Activated CD4-positive, alpha-beta T cell treated with anti-CD3 and anti-CD28 coated beads, Interleukin-2, amount 10 ng/mL, durations not matched to agents 24 days and 14 days (primary cell): ENCODE measurements at regions of chr16 and their contacts with region 1.

Region 1: DNA sequence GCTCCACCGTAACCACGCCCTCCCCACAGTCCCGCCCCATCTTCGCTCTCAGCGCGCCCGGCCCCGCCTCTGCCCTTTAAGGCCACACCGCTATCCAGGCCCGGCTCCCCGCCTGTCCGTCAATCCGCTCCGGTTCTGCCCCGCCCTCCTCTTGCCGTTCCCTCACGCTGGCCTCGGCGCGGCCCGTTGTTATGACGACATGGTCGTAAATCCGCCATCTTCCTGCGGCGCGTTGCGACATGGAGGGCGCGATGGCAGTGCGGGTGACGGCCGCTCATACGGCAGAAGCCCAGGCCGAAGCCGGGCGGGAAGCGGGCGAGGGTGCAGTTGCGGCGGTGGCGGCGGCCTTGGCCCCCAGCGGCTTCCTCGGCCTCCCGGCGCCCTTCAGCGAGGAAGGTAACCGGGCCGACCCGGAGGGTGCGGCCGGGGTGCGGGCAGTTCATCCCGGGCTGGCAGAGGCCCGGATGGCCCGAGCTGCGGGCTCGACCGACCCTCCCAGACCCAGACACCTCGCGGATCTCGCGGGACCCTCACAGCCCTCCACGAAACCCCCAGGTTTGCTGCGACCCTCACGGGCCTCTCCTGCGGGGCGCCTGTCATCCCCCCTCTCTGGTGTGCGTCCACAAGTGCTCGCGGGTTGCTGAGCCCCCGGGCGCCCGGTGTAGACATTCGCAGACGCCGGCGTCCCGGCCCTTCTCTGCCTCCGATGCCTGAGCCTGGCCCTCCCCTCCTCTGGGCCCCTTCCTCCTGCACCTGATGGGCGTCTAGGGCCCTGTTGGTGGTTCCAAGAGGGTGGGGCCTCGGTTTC is at the start of gene E4F1:
- DNase-seq: peak; percentile 100
- H3K4me3 Mint-ChIP-seq: peak within 1 kb of the TSS; percentile 85
- H3K27ac Mint-ChIP-seq: peak within 1 kb of the TSS; percentile 79
- H3K4me1 Mint-ChIP-seq: peaks cover 13% of the 10 kb centered on the region
- H3K27me3 Mint-ChIP-seq: no peaks in the 10 kb centered on the region
- total RNA-seq, gene E4F1: 33.4 and 34.7 TPM in 2 replicates

Region 2: GRCh38 chr16:2205104-2205966 is 18.2 kb before region 1 on chr16 and contains the start of gene MLST8:
- intact Hi-C with region 1: loop called (anchors 1 kb)
- DNase-seq: peak; percentile 98
- H3K4me3 Mint-ChIP-seq: peak within 1 kb of the TSS; percentile 90
- H3K27ac Mint-ChIP-seq: peak within 1 kb of the TSS; percentile 87
- H3K4me1 Mint-ChIP-seq: peaks cover 15% of the 10 kb centered on the region
- H3K27me3 Mint-ChIP-seq: peaks cover 5% of the 10 kb centered on the region
- total RNA-seq, gene MLST8: 65.2 and 70.3 TPM in 2 replicates

Region 3: GRCh38 chr16:2251483-2252240 is 28.1 kb after region 1 on chr16 and contains the start of gene ECI1:
- intact Hi-C with region 1: loop called (anchors 1 kb)
- DNase-seq: peak; percentile 95
- H3K4me3 Mint-ChIP-seq: peak within 1 kb of the TSS; percentile 93
- H3K27ac Mint-ChIP-seq: peak within 1 kb of the TSS; percentile 90
- H3K4me1 Mint-ChIP-seq: peaks cover 6% of the 10 kb centered on the region
- H3K27me3 Mint-ChIP-seq: no peaks in the 10 kb centered on the region
- total RNA-seq, gene ECI1: 34.1 and 38.7 TPM in 2 replicates

Region 4: DNA sequence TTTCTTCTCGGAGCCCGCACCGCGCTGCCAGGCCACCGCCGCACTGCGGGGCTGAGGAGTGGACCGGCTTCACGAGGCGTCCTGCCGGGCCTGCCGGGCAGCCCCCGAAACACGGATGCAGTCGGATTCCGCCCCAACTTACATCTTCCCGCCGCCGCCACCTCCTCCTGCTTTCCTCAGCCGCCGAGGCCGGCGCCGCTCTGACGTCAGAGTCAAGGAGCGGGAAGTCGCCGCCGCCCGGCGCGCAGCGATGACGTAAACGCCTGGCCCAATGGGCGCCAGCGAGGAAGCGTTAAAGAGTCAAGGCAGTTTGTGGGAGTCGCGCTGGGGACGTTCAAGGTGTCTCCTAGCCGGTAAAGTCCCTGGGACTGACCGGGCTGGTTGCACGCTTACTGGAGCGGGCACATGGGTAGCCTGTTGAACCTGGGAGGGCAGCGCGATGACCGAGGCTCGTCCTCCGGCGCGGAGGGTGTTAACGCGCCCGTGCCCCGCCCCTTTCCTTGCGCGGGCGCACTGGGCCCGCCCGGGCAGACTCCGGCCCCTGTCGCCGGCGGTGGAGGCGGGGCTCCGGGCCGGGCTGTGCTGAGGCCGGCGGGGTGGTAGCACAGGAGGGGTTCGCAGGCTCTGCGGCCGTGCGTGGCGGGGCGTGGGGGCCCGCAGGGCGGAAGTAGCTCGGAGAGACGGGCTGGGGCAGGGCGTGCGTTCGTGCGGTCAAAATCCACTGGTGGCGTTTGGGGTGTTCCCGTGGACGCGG is 44.5 kb after region 1 on chr16 and contains the start of gene RNPS1:
- intact Hi-C with region 1: loop called (anchors 1 kb)
- DNase-seq: peak; percentile 99
- H3K4me3 Mint-ChIP-seq: peak within 1 kb of the TSS; percentile 94
- H3K27ac Mint-ChIP-seq: peak within 1 kb of the TSS; percentile 97
- H3K4me1 Mint-ChIP-seq: peaks cover 27% of the 10 kb centered on the region
- H3K27me3 Mint-ChIP-seq: peaks cover 1% of the 10 kb centered on the region
- total RNA-seq, gene RNPS1: 399 and 416 TPM in 2 replicates

Region 5: GRCh38 chr16:2429034-2429770 is 205.6 kb after region 1 on chr16 and contains the start of gene CCNF:
- intact Hi-C with region 1: loop called (anchors 1 kb)
- DNase-seq: peak; percentile 99
- H3K4me3 Mint-ChIP-seq: peak within 1 kb of the TSS; percentile 91
- H3K27ac Mint-ChIP-seq: peak within 1 kb of the TSS; percentile 69
- H3K4me1 Mint-ChIP-seq: peaks cover 30% of the 10 kb centered on the region
- H3K27me3 Mint-ChIP-seq: no peaks in the 10 kb centered on the region
- total RNA-seq, gene CCNF: 44.7 and 45.7 TPM in 2 replicates

Region 6: GRCh38 chr16:2531767-2532493 is 308.4 kb after region 1 on chr16:
- intact Hi-C with region 1: loop called (anchors 10 kb)
- DNase-seq: peak; percentile 99
- H3K4me3 Mint-ChIP-seq: peak overlapping the region; percentile 96
- H3K27ac Mint-ChIP-seq: peak overlapping the region; percentile 98
- H3K4me1 Mint-ChIP-seq: peaks cover 18% of the 10 kb centered on the region
- H3K27me3 Mint-ChIP-seq: no peaks in the 10 kb centered on the region